GM12878 (cell line): ENCODE measurements at regions of chr3 and their contacts with region 1.

Region 1: GRCh38 chr3:16550676-16551341 is 37.3 kb upstream of the RFTN1 start:
- DNase-seq: peak; percentile 81
- ATAC-seq: peak; percentile 98
- H3K4me3 ChIP-seq: no peak overlapping the region
- H3K27ac ChIP-seq: 0 out of 2 replicates have a peak overlapping the region, but pooled peaks have one; percentile 9
- H3K4me1 ChIP-seq: peaks cover 13% of the 10 kb centered on the region
- H3K27me3 ChIP-seq: no peaks in the 10 kb centered on the region
- CTCF ChIP-seq: peak; percentile 83 to 94 (median 90)
- EP300 ChIP-seq: no peak
- POLR2A ChIP-seq: peak; percentile 25; the same call in 1 of the 2 replicates
- RAD21 ChIP-seq: peak; percentile 100

Region 2: GRCh38 chr3:16060358-16060852 is 490.4 kb before region 1 on chr3:
- CTCF ChIA-PET with region 1: no interaction called
- POLR2A ChIA-PET with region 1: no interaction called
- RAD21 ChIA-PET with region 1: no interaction called
- SMC1A ChIA-PET with region 1: no interaction called
- in situ Hi-C with region 1: loop called (anchors 10 kb)
- intact Hi-C with region 1: no loop called
- DNase-seq: no peak
- ATAC-seq: no peak
- H3K4me3 ChIP-seq: no peak overlapping the region
- H3K27ac ChIP-seq: no peak overlapping the region
- H3K4me1 ChIP-seq: no peaks in the 10 kb centered on the region
- H3K27me3 ChIP-seq: no peaks in the 10 kb centered on the region
- CTCF ChIP-seq: no peak
- EP300 ChIP-seq: no peak
- POLR2A ChIP-seq: no peak
- RAD21 ChIP-seq: no peak

Region 3: GRCh38 chr3:16538507-16538906 is 12.3 kb before region 1 on chr3:
- CTCF ChIA-PET with region 1: interaction called, 4 read pairs
- POLR2A ChIA-PET with region 1: interaction called, 4 read pairs
- RAD21 ChIA-PET with region 1: interaction called, 3 read pairs
- SMC1A ChIA-PET with region 1: interaction called, 10 read pairs
- in situ Hi-C with region 1: no loop called
- intact Hi-C with region 1: no loop called
- DNase-seq: no peak
- ATAC-seq: no peak
- H3K4me3 ChIP-seq: no peak overlapping the region
- H3K27ac ChIP-seq: no peak overlapping the region
- H3K4me1 ChIP-seq: no peaks in the 10 kb centered on the region
- H3K27me3 ChIP-seq: no peaks in the 10 kb centered on the region
- CTCF ChIP-seq: no peak
- EP300 ChIP-seq: no peak
- POLR2A ChIP-seq: no peak
- RAD21 ChIP-seq: no peak